Activated naive CD4-positive, alpha-beta T cell treated with anti-CD3 and anti-CD28 coated beads for 36 hours (primary cell): ENCODE measurements at regions of chr6 and their contacts with region 1.

Region 1: DNA sequence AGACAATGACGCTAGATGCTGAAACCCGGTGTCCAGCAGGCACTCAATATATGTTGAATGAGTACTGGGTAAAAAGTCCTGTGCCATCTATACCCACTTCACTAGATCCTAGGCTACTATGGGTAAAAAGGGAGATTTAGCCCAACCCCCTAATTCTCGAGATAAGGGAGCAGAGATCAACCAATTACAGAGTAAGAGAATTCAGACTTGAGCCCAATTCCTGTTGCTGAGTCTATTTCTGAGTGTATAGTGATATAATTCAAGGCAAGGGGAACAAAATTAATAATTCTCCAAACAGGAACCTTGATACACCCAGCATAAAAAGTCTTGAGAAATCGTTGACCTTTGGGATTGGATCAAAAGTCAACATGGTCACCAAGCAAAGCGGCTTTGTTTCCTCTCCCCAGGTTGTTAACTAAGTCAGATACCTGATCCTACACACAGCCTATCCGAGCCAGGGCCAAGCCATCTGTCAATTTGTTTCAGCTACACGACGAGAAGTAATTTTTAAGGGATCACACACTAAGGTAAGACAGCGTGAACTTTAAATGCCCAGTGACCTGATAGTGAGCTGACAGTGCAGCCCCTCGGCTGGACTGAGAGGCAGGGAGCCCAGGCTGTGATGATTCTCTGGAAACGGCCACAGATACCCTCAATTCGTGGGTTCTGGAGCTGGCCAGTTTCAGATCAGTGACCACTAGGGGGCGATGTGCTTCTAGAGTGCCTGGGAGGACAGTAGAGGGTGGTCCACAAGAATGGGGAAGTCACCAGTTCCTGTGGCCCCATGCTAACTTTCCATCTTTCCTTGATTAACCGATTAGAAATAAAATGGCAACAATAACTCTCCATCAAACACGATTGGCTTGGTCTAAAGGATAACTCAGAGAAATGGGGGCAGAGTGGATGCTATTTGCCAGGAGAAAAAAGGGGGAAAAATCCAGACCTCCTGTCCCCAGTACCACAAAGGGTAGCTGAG is 46.2 kb downstream of the SLC22A23 start:
- DNase-seq: peak; percentile 82
- H3K4me3 Mint-ChIP-seq: no peak overlapping the region
- H3K27ac Mint-ChIP-seq: no peak overlapping the region
- H3K4me1 Mint-ChIP-seq: peaks cover 21% of the 10 kb centered on the region
- H3K27me3 Mint-ChIP-seq: no peaks in the 10 kb centered on the region

Region 2: DNA sequence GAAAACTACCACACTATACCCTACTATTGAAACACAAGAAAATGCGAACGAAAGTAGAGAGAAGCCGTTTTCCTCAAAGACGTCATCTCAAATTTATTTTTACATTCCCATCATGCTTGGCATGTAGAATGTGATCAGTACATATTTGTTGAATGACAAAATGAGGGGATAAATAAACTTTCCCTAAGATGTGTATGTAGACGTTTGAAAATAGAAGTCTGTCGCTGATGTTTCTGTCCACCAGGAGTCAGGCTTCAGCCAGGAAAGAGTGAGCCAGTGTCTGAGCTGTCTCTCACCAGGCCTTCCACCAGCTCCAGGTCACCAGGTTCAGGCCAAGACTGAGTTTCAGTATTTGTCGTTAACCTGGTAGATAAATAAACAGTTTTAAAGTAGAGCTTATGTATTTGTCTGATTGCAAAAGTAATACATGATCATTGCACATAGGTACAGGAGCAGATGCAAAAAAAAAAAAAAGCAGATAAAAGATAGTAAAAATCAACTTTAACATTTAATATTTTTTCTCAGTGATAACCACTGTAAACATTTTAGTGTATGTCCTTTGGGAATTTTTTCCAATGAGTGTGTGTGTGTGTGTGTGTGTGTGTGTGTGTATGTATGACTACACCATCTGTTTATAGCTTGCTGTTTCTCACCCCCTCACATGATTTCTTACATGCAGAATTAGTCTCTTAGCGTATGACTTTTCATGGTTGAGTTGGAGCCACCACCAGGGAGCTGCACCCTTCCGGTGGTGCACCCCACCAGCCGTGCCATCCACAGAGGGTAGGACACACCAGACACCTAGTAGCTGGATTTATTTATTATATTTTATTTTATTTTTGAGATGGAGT is 619.3 kb before region 1 on chr6:
- CTCF ChIA-PET with region 1: no interaction called
- intact Hi-C with region 1: no loop called
- DNase-seq: peak; percentile 87
- H3K4me3 Mint-ChIP-seq: no peak overlapping the region
- H3K27ac Mint-ChIP-seq: no peak overlapping the region
- H3K4me1 Mint-ChIP-seq: peaks cover 39% of the 10 kb centered on the region
- H3K27me3 Mint-ChIP-seq: no peaks in the 10 kb centered on the region

Region 3: DNA sequence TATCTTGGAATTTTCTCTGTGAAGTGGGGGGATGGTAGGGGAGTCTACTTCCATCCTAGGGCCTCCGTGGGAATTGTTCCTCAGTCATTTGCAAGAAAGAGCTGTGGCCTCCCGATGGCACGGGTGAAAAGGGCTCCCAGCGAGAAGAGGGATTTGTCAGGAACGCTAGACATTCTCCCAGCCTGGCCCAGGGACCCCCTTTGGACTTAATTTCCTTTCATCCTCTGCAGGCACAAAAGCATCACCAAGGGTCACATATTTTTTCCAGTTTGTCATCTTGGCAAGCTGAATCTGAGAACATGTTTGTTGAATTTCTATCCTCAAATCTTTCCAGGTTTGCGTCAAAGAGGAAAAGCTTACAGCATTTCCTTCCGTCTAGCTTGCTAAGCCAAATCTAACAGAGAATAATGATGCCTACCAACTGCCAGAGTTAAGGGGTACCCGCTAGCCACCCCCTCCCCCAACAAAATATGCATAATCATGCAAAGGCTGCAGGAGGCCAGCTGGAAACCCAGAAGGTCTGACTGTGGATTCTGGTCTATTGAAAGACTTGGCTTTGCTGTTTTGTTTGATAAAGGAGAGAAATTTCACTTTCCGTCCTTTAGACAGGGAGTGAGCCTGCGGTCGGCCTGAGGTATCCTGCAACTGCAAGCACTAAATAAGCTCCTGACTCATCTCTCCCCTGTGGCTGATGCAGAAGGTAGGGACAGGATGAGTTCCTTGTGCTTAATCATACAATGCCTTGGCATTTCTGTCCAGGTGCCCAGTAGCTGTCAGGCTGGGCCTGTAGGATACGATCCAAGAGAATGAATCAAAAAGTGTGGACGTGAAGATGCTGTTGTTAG is 128.8 kb before region 1 on chr6:
- CTCF ChIA-PET with region 1: interaction called, 4 read pairs
- intact Hi-C with region 1: loop called (anchors 1 kb)
- DNase-seq: no peak
- H3K4me3 Mint-ChIP-seq: no peak overlapping the region
- H3K27ac Mint-ChIP-seq: no peak overlapping the region
- H3K4me1 Mint-ChIP-seq: peaks cover 2% of the 10 kb centered on the region
- H3K27me3 Mint-ChIP-seq: no peaks in the 10 kb centered on the region

Region 4: GRCh38 chr6:3431994-3432393 is 21.3 kb after region 1 on chr6:
- CTCF ChIA-PET with region 1: no interaction called
- intact Hi-C with region 1: no loop called
- DNase-seq: no peak
- H3K4me3 Mint-ChIP-seq: no peak overlapping the region
- H3K27ac Mint-ChIP-seq: no peak overlapping the region
- H3K4me1 Mint-ChIP-seq: no peaks in the 10 kb centered on the region
- H3K27me3 Mint-ChIP-seq: no peaks in the 10 kb centered on the region

Region 5: DNA sequence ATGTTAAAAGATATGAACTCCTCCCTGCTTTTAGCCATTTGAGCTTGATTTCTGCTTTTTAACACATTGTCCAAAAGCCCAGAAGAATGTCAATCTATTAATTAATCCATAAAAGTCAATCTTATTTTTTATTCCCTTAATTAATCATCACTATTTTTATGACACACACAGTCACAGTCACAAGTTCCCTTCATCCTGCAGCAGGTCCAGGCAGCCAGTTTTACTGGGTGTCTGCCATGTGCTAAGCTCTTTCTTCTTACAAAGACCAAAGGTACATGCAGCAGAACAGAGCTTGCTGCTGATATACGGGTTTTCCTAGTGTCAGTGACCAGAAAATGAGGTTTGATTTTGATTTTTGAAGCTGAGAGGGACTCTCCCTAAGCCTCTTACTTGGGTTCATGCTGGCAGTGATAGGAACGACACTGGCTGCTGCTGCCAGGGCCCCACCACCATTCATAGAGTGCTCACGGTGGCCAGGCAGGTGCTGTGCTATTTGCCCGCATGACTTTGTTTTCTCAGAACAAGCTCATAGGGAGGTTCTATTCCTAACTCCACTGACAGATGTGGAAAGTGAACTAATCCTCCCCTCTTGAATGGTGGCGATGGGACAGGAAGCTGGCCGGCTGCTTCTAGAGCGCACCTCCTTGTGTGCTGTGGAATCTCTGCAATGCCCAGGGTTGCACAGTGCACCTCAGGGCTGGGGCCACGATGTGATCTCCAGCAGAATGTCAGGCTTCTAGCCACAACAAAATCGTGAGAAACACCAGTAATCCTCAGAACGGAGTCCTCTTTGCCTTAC is 99.7 kb after region 1 on chr6:
- CTCF ChIA-PET with region 1: interaction called, 9 read pairs
- intact Hi-C with region 1: loop called (anchors 5 kb)
- DNase-seq: no peak
- H3K4me3 Mint-ChIP-seq: no peak overlapping the region
- H3K27ac Mint-ChIP-seq: no peak overlapping the region
- H3K4me1 Mint-ChIP-seq: no peaks in the 10 kb centered on the region
- H3K27me3 Mint-ChIP-seq: peaks cover 8% of the 10 kb centered on the region